H1 (cell line): ENCODE measurements at regions of chrX and their contacts with region 1.

Region 1: DNA sequence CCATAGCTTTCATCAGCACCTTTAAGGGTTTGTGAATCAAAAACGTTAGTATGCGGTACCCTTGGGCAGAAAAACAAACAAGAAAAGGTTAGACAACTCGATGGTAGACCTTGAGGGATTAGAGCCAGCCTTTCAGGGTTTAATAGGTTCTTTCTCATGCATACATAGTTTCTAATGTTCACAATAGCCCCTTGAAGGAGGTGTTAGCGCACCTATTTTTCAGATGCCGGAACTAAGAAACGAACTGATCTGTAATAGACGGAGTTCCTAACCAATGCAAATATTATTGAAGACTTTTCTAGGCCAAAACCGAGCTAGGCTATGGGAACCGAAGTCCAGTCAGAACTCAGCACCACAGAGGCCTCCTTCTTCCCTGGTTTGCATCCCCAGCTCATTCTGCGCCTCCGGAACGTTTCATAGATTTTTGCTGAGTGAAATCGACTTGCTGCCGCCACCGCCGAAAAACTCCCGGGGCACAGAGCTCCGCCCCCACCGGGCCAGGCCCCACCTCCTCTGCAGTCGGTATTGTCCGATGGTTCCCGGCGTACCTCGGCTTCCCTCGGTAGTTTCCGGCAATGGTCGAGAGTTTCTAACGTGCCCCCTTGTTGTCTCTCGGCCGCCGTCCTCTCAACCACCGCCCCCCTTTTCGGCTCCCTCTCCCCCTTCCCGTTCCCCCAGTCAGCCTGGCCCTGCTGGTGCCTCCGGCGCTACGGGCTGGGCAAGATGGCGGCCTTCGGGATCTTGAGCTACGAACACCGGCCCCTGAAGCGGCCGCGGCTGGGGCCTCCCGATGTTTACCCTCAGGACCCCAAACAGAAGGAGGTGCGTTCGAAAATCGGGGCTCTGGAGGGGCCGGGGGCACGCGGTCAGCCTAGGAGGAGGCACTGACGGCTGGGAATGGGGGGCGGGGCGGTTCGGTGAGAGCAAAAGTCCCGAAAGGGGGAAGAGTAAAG is at the start of gene MED12:
- DNase-seq: peak in 1 of 2 experiments; percentile 86
- H3K4me3 ChIP-seq: peak within 1 kb of the TSS; percentile 43 to 84 (median 55)
- H3K27ac ChIP-seq: no peak within 1 kb of the TSS; the same call in 1 of the 2 replicates
- H3K4me1 ChIP-seq: peaks cover 0 to 6% (median 2%) of the 10 kb centered on the region in 4 experiments; a peak in 3 of 7 replicates
- H3K27me3 ChIP-seq: peaks cover 0 to 3% (median 0%) of the 10 kb centered on the region in 4 experiments; a peak in 1 of 7 replicates
- CTCF ChIP-seq: no peak
- EP300 ChIP-seq: no peak
- POLR2A ChIP-seq: no peak; a peak in 1 of 3 replicates
- RAD21 ChIP-seq: peak; percentile 1 to 10; a peak in 1 of 4 replicates
- total RNA-seq, gene MED12: 43.5 and 48.9 TPM in 2 replicates

Region 2: GRCh38 chrX:71103110-71103983 is 15.0 kb before region 1 on chrX:
- CTCF ChIA-PET with region 1: interaction called, 4 read pairs
- POLR2A ChIA-PET with region 1: interaction called, 17 read pairs
- DNase-seq: peak; percentile 43 to 56
- H3K4me3 ChIP-seq: peak overlapping the region in 2 of 4 experiments; percentile 13 to 53; a peak in 4 of 8 replicates
- H3K27ac ChIP-seq: peak overlapping the region; percentile 36; the same call in 1 of the 2 replicates
- H3K4me1 ChIP-seq: peaks cover 6 to 39% (median 18%) of the 10 kb centered on the region in 4 experiments
- H3K27me3 ChIP-seq: peaks cover 0 to 5% (median 0%) of the 10 kb centered on the region in 4 experiments; a peak in 1 of 7 replicates
- CTCF ChIP-seq: no peak
- EP300 ChIP-seq: no peak
- POLR2A ChIP-seq: no peak
- RAD21 ChIP-seq: no peak

Region 3: GRCh38 chrX:71128915-71129765 is 10.8 kb after region 1 on chrX:
- CTCF ChIA-PET with region 1: interaction called, 13 read pairs
- POLR2A ChIA-PET with region 1: no interaction called
- DNase-seq: peak in 1 of 2 experiments; percentile 76
- H3K4me3 ChIP-seq: no peak overlapping the region
- H3K27ac ChIP-seq: no peak overlapping the region
- H3K4me1 ChIP-seq: no peaks in the 10 kb centered on the region
- H3K27me3 ChIP-seq: no peaks in the 10 kb centered on the region
- CTCF ChIP-seq: peak; percentile 82 to 89 (median 85)
- EP300 ChIP-seq: no peak
- POLR2A ChIP-seq: no peak
- RAD21 ChIP-seq: peak; percentile 78 to 80

Region 4: GRCh38 chrX:71198066-71198465 is 79.8 kb after region 1 on chrX:
- CTCF ChIA-PET with region 1: no interaction called
- POLR2A ChIA-PET with region 1: no interaction called
- DNase-seq: no peak
- H3K4me3 ChIP-seq: no peak overlapping the region
- H3K27ac ChIP-seq: no peak overlapping the region
- H3K4me1 ChIP-seq: peaks cover 0 to 4% (median 0%) of the 10 kb centered on the region in 4 experiments; a peak in 2 of 7 replicates
- H3K27me3 ChIP-seq: no peaks in the 10 kb centered on the region
- CTCF ChIP-seq: no peak
- EP300 ChIP-seq: no peak
- POLR2A ChIP-seq: no peak
- RAD21 ChIP-seq: no peak

Region 5: DNA sequence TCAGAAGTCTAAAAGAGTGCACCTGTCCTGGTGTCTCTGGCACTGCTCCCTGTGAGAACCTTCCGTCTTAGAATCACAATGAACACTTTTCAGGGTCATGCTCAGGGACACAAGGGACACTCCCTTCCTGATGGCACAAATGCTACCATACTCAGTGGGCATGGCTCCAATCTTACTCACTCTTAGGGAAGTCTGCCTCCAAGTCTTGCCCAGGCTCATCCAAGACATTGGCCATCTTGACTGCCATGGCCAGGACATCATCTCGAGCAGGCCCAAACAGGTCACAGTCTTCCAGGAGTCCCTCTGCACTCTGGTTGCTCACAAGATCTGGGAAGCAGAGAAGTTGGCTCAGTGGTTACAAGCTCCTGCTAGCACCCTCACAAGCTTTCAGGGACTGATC is 126.9 kb after region 1 on chrX:
- CTCF ChIA-PET with region 1: no interaction called
- POLR2A ChIA-PET with region 1: no interaction called
- DNase-seq: no peak
- H3K4me3 ChIP-seq: no peak overlapping the region
- H3K27ac ChIP-seq: no peak overlapping the region
- H3K4me1 ChIP-seq: no peaks in the 10 kb centered on the region
- H3K27me3 ChIP-seq: no peaks in the 10 kb centered on the region
- CTCF ChIP-seq: no peak
- EP300 ChIP-seq: no peak
- POLR2A ChIP-seq: no peak
- RAD21 ChIP-seq: no peak